ENCODE measurements at regions of chr1 and their contacts with region 1.

Region 1: DNA sequence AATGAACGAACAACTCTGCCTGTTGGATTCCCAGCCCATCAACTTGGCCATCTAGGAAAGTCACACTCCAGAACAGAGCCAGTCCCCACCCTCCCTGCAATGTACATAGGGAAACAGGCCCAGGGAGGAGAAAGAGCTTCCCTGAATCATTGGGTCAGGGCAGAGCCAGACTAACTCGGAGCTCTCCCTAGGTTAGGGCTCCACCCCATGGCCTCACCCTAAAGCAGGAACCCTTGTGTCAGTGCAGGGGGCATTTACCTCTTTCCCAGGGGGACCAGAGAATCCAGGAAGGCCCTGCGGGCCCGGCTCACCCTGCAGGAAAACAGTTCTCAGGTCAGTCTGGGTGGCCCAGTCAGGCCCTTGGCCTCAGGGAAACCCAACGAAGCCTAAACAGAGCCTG is 11.6 kb downstream of the COL9A2 start:
- DNase-seq: peak; percentile 51
- ATAC-seq: peak; percentile 82
- H3K4me3 ChIP-seq: no peak overlapping the region
- H3K27ac ChIP-seq: no peak overlapping the region
- H3K4me1 ChIP-seq: peaks cover 7% of the 10 kb centered on the region; the same call in 1 of the 2 replicates
- H3K27me3 ChIP-seq: no peaks in the 10 kb centered on the region
- CTCF ChIP-seq: peak; percentile 43; the same call in 1 of the 2 replicates

Region 2: GRCh38 chr1:39529901-39530535 is 775.4 kb before region 1 on chr1:
- CTCF ChIA-PET with region 1: no interaction called
- POLR2A ChIA-PET with region 1: no interaction called
- intact Hi-C with region 1: no loop called
- DNase-seq: no peak
- ATAC-seq: no peak
- H3K4me3 ChIP-seq: no peak overlapping the region
- H3K27ac ChIP-seq: no peak overlapping the region
- H3K4me1 ChIP-seq: no peaks in the 10 kb centered on the region
- H3K27me3 ChIP-seq: no peaks in the 10 kb centered on the region
- CTCF ChIP-seq: no peak

Region 3: GRCh38 chr1:40153073-40153770 is 152.2 kb before region 1 on chr1:
- CTCF ChIA-PET with region 1: interaction called, 3 read pairs
- POLR2A ChIA-PET with region 1: interaction called, 7 read pairs
- intact Hi-C with region 1: loop called (anchors 2 kb)
- DNase-seq: peak; percentile 69
- ATAC-seq: peak; percentile 53
- H3K4me3 ChIP-seq: peak overlapping the region; percentile 54
- H3K27ac ChIP-seq: no peak overlapping the region
- H3K4me1 ChIP-seq: peaks cover 28% of the 10 kb centered on the region
- H3K27me3 ChIP-seq: no peaks in the 10 kb centered on the region
- CTCF ChIP-seq: peak; percentile 89

Region 4: GRCh38 chr1:40316595-40317393 is 11.3 kb after region 1 on chr1 and contains the start of gene COL9A2:
- CTCF ChIA-PET with region 1: no interaction called
- POLR2A ChIA-PET with region 1: no interaction called
- intact Hi-C with region 1: no loop called
- DNase-seq: peak; percentile 45
- ATAC-seq: peak; percentile 67
- H3K4me3 ChIP-seq: peak within 1 kb of the TSS; percentile 87
- H3K27ac ChIP-seq: no peak within 1 kb of the TSS
- H3K4me1 ChIP-seq: no peaks in the 10 kb centered on the region
- H3K27me3 ChIP-seq: no peaks in the 10 kb centered on the region
- CTCF ChIP-seq: no peak
- total RNA-seq, gene COL9A2: 4.4 and 7.0 TPM in 2 replicates

Measured in PC-3 (cell line).